Left ventricle myocardium superior (tissue), 1 donor: ENCODE measurements at regions of chr13 and their contacts with region 1.

Region 1: GRCh38 chr13:79533781-79534400 is 52.9 kb downstream of the NDFIP2 start:
- DNase-seq: no peak
- ATAC-seq: no peak

Region 2: GRCh38 chr13:79480954-79481684 is 52.8 kb before region 1 on chr13 and contains the start of gene NDFIP2:
- intact Hi-C with region 1: loop called (anchors 10 kb)
- DNase-seq: peak; percentile 94
- ATAC-seq: peak; percentile 94
- total RNA-seq, gene NDFIP2: 46.3 TPM